Activated T-helper 1 cell treated with anti-CD3 and anti-CD28 coated beads, Interleukin-12 subunit alpha, Interleukin-12 subunit beta, Interleukin-2, Interleukin-4 antibody, amounts not matched to agents 30 ng/mL and 10 ng/mL and 1 ng/mL, durations not matched to agents 14 hours and 24 hours and 36 hours (primary cell): ENCODE measurements at regions of chr18 and their contacts with region 1.

Region 1: DNA sequence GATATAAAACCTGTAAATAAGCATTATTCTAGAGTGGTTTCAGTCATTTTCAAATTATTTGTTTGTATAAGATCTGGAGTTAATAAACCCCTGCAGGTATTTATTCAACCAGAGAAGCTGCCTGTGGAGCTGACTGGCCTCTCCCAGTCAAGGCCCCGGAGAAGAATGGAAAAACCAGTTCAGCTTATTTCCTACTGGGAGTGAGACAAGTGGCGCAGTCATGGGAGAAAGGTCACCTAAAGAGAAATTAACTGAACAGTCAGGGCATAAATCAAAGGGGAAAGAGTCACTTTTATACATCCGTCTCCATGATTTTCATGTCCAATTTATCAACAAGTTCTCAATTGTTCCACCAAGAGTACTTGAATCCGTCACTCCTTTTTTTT is 240.9 kb downstream of the RNF152 start:
- DNase-seq: no peak
- H3K4me3 Mint-ChIP-seq: no peak overlapping the region
- H3K27ac Mint-ChIP-seq: no peak overlapping the region
- H3K4me1 Mint-ChIP-seq: no peaks in the 10 kb centered on the region
- H3K27me3 Mint-ChIP-seq: no peaks in the 10 kb centered on the region

Region 2: DNA sequence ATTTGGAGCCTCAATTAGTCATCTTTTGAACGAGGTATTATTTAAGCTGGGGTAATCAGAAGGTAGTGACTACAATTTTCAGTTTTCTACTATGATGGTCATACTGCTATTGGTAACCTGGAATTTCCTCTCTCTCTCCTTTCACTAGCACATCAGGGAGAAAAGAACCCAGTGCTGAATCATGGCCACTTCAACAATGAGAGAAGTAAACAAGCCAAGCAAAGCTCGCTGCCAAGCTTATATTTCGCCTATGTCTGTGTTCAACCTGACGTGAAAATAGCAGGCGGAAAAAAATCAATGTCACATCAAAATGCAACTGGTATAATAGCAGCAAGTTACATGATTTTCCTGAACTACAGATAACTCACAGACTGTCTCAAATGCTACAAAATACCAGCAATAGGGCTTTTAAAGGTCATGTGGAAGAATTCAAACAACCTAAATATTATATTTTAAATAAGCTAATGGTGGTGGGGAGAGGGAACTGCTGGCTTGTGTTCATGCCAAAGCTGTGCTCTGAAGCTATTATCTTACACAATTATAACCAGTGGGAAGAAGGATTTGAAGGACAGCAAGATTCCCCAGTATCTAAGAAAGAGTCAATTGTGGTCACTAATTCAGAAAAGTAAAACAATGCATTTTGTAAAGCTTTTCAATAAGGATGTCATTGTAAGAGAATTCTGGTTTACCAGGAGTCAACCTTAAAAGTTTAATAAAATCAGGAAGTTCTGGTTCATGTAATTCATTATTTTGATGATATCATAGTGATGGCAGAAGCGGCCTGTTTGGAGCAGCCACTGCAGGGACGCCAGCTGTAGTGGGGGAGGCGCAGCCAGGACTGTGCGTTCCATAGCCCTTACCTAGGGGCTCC is 202.9 kb after region 1 on chr18:
- intact Hi-C with region 1: loop called (anchors 10 kb)
- DNase-seq: no peak
- H3K4me3 Mint-ChIP-seq: no peak overlapping the region
- H3K27ac Mint-ChIP-seq: no peak overlapping the region
- H3K4me1 Mint-ChIP-seq: no peaks in the 10 kb centered on the region
- H3K27me3 Mint-ChIP-seq: peaks cover 10% of the 10 kb centered on the region